ENCODE measurements at regions of chr19 and their contacts with region 1.

Region 1: DNA sequence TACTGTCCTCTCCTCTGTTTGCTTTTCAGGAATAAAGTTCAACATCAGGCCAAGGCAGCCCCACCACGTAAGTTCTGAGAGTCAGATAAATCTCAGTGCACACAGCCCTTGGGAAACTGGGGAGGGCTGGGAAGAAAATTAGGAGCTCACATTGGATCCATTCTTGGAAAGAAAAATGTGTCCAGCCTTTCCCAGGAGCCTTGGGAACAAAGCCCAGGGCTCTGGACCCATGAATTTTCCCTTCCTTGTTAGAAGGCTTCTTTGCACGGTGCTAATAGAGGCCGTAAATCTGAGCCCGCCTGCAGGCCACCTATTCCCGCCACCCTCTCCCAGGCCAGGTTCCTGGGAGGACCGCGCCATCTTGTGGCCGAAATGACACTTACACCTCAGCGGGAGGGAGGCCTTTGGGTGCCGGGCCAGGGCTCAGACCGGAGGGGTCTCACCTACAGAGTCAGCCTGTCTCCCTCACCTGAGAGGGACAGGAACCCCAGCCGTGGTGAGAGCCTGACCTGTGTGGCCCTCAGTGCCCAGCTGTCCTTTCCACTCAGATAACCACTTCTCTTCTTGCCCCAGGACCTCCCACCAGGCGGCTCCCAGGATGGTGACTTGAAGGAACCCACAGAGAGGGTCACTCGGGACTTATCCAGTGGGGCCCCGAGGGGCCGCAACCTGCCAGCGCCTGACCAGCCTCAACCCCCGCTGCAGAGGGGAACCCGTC is 25.1 kb upstream of the KCTD15 start:
- DNase-seq: peak in 1 of 2 donors; percentile 24
- ATAC-seq: peak; percentile 55 to 56
- H3K4me3 ChIP-seq: no peak overlapping the region
- H3K27ac ChIP-seq: no peak overlapping the region
- H3K4me1 ChIP-seq: no peaks in the 10 kb centered on the region
- H3K27me3 ChIP-seq: peaks cover 0 to 5% (median 0%) of the 10 kb centered on the region in 3 donors
- CTCF ChIP-seq: peak; percentile 43 to 84 (median 78)
- POLR2A ChIP-seq: no peak

Region 2: DNA sequence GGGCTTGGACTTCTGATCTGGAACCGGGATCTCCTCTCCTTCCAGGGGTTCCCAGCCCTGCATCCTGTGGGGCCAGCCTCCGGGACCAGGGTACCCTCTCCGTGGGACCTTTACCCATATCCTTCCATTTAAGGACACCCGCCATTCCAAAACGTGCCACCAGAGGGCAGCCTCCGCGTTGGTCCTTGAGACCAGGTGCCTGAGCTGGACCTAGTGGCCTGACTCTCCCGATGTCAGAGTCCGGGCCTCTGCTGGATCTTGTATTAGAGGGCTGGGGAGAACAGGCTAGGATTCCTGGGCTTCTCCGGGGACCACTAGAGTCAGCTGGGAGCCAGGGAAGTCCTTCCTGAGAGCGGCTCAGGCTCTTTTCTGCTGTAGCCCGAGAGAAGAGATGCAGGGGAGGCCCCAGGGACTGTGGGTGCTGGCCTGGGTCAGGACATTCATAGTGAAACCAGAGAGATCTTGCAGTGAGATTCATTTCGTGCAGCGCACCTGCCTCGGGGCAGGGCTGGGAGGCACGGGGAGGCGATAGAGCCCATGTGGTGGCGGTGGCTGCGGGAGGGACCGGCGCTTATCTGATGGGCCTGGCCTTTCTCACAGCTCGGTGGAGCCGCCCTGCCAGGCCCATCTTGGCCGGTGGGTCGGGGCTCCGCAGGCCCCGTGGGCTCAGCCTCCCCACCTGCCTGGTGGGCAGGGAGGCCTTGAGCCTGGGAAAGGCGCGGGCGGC is 536.1 kb before region 1 on chr19:
- in situ Hi-C with region 1: loop called in 3 of 4 experiments (anchors 25 kb)
- intact Hi-C with region 1: loop called (anchors 5 kb)
- DNase-seq: peak; percentile 31 to 63
- ATAC-seq: peak in 1 of 2 donors; percentile 77
- H3K4me3 ChIP-seq: no peak overlapping the region
- H3K27ac ChIP-seq: no peak overlapping the region
- H3K4me1 ChIP-seq: no peaks in the 10 kb centered on the region
- H3K27me3 ChIP-seq: no peaks in the 10 kb centered on the region
- CTCF ChIP-seq: peak; percentile 67 to 90 (median 86)
- POLR2A ChIP-seq: no peak

Region 3: GRCh38 chr19:33241530-33242101 is 529.9 kb before region 1 on chr19:
- in situ Hi-C with region 1: loop called in 3 of 4 experiments (anchors 25 kb)
- intact Hi-C with region 1: loop called (anchors 5 kb)
- DNase-seq: no peak
- ATAC-seq: peak in 1 of 2 donors; percentile 33
- H3K4me3 ChIP-seq: no peak overlapping the region
- H3K27ac ChIP-seq: no peak overlapping the region
- H3K4me1 ChIP-seq: no peaks in the 10 kb centered on the region
- H3K27me3 ChIP-seq: no peaks in the 10 kb centered on the region
- CTCF ChIP-seq: peak; percentile 81 to 91 (median 84)
- POLR2A ChIP-seq: no peak

Region 4: DNA sequence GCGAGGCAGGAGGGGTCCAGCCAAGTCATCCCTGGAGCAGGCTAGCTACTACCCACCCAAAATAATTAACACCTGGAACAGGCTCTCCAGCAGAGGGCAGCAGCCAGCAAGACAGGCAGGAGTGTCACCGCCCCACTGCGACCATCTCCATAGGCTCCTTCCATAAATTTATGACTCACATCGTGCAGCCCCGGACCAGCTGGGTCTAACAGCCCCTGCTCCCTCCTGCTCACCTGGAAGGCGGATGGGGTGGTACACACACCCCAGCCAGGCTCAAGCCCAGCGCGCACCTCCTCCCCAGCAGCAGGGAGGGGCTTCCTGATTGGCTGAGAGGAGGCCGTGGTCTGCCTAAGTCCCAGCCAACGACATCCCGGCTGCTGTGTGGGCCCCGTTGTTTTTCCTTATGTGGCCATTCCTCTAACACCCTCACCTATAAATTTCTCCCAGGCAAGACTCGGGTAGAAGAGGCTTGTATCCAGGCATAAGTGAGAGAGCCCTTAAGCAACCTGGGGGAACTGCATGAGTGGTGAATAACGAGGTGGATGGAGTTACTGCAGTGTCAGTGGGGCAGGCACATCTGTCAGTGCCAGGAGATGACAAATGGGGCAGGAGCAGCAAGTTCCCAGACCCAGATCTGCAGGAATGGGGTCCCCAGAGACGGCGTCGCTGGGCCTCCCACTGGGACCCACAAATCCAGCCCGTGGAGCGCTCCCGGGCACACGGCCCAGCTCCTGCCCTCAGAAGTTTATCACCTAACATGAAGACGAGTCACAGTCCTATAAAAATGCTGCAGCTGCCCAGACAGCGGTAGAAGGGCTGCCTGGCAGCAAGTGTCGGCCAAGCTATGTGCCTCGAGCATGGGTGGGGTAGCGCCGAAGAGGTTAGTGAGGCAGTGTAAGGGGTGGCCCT is 355.0 kb before region 1 on chr19:
- in situ Hi-C with region 1: loop called in 1 of 4 experiments (anchors 10 kb)
- intact Hi-C with region 1: loop called (anchors 5 kb)
- DNase-seq: no peak
- ATAC-seq: peak in 1 of 2 donors; percentile 66
- H3K4me3 ChIP-seq: no peak overlapping the region
- H3K27ac ChIP-seq: no peak overlapping the region
- H3K4me1 ChIP-seq: no peaks in the 10 kb centered on the region
- H3K27me3 ChIP-seq: no peaks in the 10 kb centered on the region
- CTCF ChIP-seq: peak; percentile 5 to 57 (median 53)
- POLR2A ChIP-seq: no peak

Region 5: GRCh38 chr19:33430674-33431277 is 340.8 kb before region 1 on chr19:
- in situ Hi-C with region 1: loop called in 3 of 4 experiments (anchors 10 to 25 kb)
- intact Hi-C with region 1: loop called (anchors 1 kb)
- DNase-seq: no peak
- ATAC-seq: peak in 1 of 2 donors; percentile 51
- H3K4me3 ChIP-seq: no peak overlapping the region
- H3K27ac ChIP-seq: no peak overlapping the region
- H3K4me1 ChIP-seq: no peaks in the 10 kb centered on the region
- H3K27me3 ChIP-seq: no peaks in the 10 kb centered on the region
- CTCF ChIP-seq: peak; percentile 38 to 76 (median 60)
- POLR2A ChIP-seq: no peak

Region 6: GRCh38 chr19:33914599-33914998 is 143.1 kb after region 1 on chr19:
- in situ Hi-C with region 1: no loop called
- intact Hi-C with region 1: no loop called
- DNase-seq: no peak
- ATAC-seq: no peak
- H3K4me3 ChIP-seq: no peak overlapping the region
- H3K27ac ChIP-seq: no peak overlapping the region
- H3K4me1 ChIP-seq: no peaks in the 10 kb centered on the region
- H3K27me3 ChIP-seq: peaks cover 0 to 3% (median 0%) of the 10 kb centered on the region in 3 donors
- CTCF ChIP-seq: no peak
- POLR2A ChIP-seq: no peak